ENCODE measurements at regions of chrX and their contacts with region 1.

Region 1: GRCh38 chrX:65581661-65582339 is 47.2 kb upstream of the LAS1L start:
- DNase-seq: peak; percentile 71
- ATAC-seq: peak; percentile 62
- H3K4me3 ChIP-seq: no peak overlapping the region
- H3K4me3 Mint-ChIP-seq: no peak overlapping the region
- H3K27ac ChIP-seq: no peak overlapping the region
- H3K27ac Mint-ChIP-seq: no peak overlapping the region
- H3K4me1 ChIP-seq: peaks cover 5 to 6% of the 10 kb centered on the region in 2 donors
- H3K4me1 Mint-ChIP-seq: peaks cover 4% of the 10 kb centered on the region
- H3K27me3 ChIP-seq: no peaks in the 10 kb centered on the region
- H3K27me3 Mint-ChIP-seq: no peaks in the 10 kb centered on the region
- CTCF ChIP-seq: peak; percentile 73

Region 2: GRCh38 chrX:65392284-65392683 is 189.5 kb before region 1 on chrX:
- CTCF ChIA-PET with region 1: no interaction called
- POLR2A ChIA-PET with region 1: no interaction called
- intact Hi-C with region 1: no loop called
- DNase-seq: no peak
- ATAC-seq: no peak
- H3K4me3 ChIP-seq: no peak overlapping the region
- H3K4me3 Mint-ChIP-seq: no peak overlapping the region
- H3K27ac ChIP-seq: no peak overlapping the region
- H3K27ac Mint-ChIP-seq: no peak overlapping the region
- H3K4me1 ChIP-seq: no peaks in the 10 kb centered on the region
- H3K4me1 Mint-ChIP-seq: no peaks in the 10 kb centered on the region
- H3K27me3 ChIP-seq: no peaks in the 10 kb centered on the region
- H3K27me3 Mint-ChIP-seq: no peaks in the 10 kb centered on the region
- CTCF ChIP-seq: no peak

Region 3: GRCh38 chrX:65635378-65635777 is 53.6 kb after region 1 on chrX:
- CTCF ChIA-PET with region 1: no interaction called
- POLR2A ChIA-PET with region 1: no interaction called
- intact Hi-C with region 1: no loop called
- DNase-seq: no peak
- ATAC-seq: no peak
- H3K4me3 ChIP-seq: no peak overlapping the region
- H3K4me3 Mint-ChIP-seq: no peak overlapping the region
- H3K27ac ChIP-seq: no peak overlapping the region
- H3K27ac Mint-ChIP-seq: no peak overlapping the region
- H3K4me1 ChIP-seq: no peaks in the 10 kb centered on the region
- H3K4me1 Mint-ChIP-seq: no peaks in the 10 kb centered on the region
- H3K27me3 ChIP-seq: no peaks in the 10 kb centered on the region
- H3K27me3 Mint-ChIP-seq: no peaks in the 10 kb centered on the region
- CTCF ChIP-seq: no peak

Region 4: GRCh38 chrX:65741823-65742222 is 160.0 kb after region 1 on chrX:
- CTCF ChIA-PET with region 1: no interaction called
- POLR2A ChIA-PET with region 1: no interaction called
- intact Hi-C with region 1: no loop called
- DNase-seq: no peak
- ATAC-seq: no peak
- H3K4me3 ChIP-seq: no peak overlapping the region
- H3K4me3 Mint-ChIP-seq: no peak overlapping the region
- H3K27ac ChIP-seq: no peak overlapping the region
- H3K27ac Mint-ChIP-seq: no peak overlapping the region
- H3K4me1 ChIP-seq: peaks cover 0 to 6% of the 10 kb centered on the region in 2 donors
- H3K4me1 Mint-ChIP-seq: peaks cover 24% of the 10 kb centered on the region
- H3K27me3 ChIP-seq: no peaks in the 10 kb centered on the region
- H3K27me3 Mint-ChIP-seq: no peaks in the 10 kb centered on the region
- CTCF ChIP-seq: no peak

Region 5: GRCh38 chrX:65783746-65784145 is 201.9 kb after region 1 on chrX:
- CTCF ChIA-PET with region 1: no interaction called
- POLR2A ChIA-PET with region 1: no interaction called
- intact Hi-C with region 1: no loop called
- DNase-seq: no peak
- ATAC-seq: no peak
- H3K4me3 ChIP-seq: no peak overlapping the region
- H3K4me3 Mint-ChIP-seq: no peak overlapping the region
- H3K27ac ChIP-seq: no peak overlapping the region
- H3K27ac Mint-ChIP-seq: no peak overlapping the region
- H3K4me1 ChIP-seq: peaks cover 0 to 5% of the 10 kb centered on the region in 2 donors
- H3K4me1 Mint-ChIP-seq: peaks cover 10% of the 10 kb centered on the region
- H3K27me3 ChIP-seq: no peaks in the 10 kb centered on the region
- H3K27me3 Mint-ChIP-seq: no peaks in the 10 kb centered on the region
- CTCF ChIP-seq: no peak

Region 6: DNA sequence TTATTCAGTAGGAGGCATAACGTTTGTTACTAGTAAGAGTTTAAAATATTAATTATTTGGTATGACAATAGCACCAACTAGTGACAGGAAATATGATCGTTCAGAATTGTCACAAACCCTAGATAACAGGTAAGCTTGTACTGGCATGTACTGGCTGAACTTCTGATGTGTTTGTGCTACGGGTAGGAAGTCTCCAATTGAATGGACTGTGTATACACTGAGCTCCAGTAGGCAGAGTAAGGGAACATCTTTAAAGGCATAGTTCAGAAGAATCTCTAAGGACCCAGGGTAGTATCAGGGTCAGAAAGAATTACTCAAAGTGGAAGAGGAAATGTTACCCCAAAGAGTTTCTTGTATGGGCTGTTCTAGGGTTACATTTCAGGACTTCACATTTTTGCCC is 826.7 kb after region 1 on chrX:
- CTCF ChIA-PET with region 1: interaction called, 10 read pairs
- POLR2A ChIA-PET with region 1: no interaction called
- intact Hi-C with region 1: no loop called
- DNase-seq: peak; percentile 16
- ATAC-seq: no peak
- H3K4me3 ChIP-seq: no peak overlapping the region
- H3K4me3 Mint-ChIP-seq: no peak overlapping the region
- H3K27ac ChIP-seq: no peak overlapping the region
- H3K27ac Mint-ChIP-seq: no peak overlapping the region
- H3K4me1 ChIP-seq: no peaks in the 10 kb centered on the region
- H3K4me1 Mint-ChIP-seq: no peaks in the 10 kb centered on the region
- H3K27me3 ChIP-seq: no peaks in the 10 kb centered on the region
- H3K27me3 Mint-ChIP-seq: peaks cover 9% of the 10 kb centered on the region
- CTCF ChIP-seq: peak; percentile 22

Region 7: DNA sequence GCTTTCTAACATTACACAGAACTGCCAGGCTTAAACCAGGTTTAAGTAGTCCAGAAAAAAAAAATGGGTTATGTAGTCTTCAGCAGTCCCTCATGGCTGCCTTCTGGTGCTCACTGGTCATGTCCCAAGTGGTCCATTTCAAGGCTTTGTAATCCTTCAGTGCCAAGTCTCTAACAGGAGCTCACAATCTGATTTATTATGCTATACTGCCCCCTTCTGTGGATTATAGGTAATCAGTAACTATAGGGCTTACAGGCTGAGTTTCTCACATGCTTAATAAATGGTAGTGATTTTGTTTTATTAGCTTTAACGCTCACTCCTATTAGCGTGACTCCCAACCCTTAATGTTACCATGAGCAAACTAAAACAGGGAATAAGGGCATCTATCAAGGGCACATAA is 1149.6 kb after region 1 on chrX:
- CTCF ChIA-PET with region 1: interaction called, 23 read pairs
- POLR2A ChIA-PET with region 1: no interaction called
- intact Hi-C with region 1: no loop called
- DNase-seq: peak; percentile 26
- ATAC-seq: no peak
- H3K4me3 ChIP-seq: no peak overlapping the region
- H3K4me3 Mint-ChIP-seq: no peak overlapping the region
- H3K27ac ChIP-seq: no peak overlapping the region
- H3K27ac Mint-ChIP-seq: no peak overlapping the region
- H3K4me1 ChIP-seq: no peaks in the 10 kb centered on the region
- H3K4me1 Mint-ChIP-seq: peaks cover 6% of the 10 kb centered on the region
- H3K27me3 ChIP-seq: no peaks in the 10 kb centered on the region
- H3K27me3 Mint-ChIP-seq: no peaks in the 10 kb centered on the region
- CTCF ChIP-seq: no peak